IMR-90 (cell line): ENCODE measurements at regions of chr2 and their contacts with region 1.

Region 1: GRCh38 chr2:84881581-84882414 is 914 bp upstream of the TRABD2A start:
- DNase-seq: peak; percentile 85
- ATAC-seq: peak; percentile 70
- H3K4me3 ChIP-seq: peak overlapping the region; percentile 91
- H3K27ac ChIP-seq: peak overlapping the region; percentile 63
- H3K4me1 ChIP-seq: peaks cover 12% of the 10 kb centered on the region
- H3K27me3 ChIP-seq: no peaks in the 10 kb centered on the region
- CTCF ChIP-seq: peak; percentile 84
- POLR2A ChIP-seq: 0 out of 2 replicates have a peak, but pooled peaks have one; percentile 1
- RAD21 ChIP-seq: peak; percentile 85

Region 2: DNA sequence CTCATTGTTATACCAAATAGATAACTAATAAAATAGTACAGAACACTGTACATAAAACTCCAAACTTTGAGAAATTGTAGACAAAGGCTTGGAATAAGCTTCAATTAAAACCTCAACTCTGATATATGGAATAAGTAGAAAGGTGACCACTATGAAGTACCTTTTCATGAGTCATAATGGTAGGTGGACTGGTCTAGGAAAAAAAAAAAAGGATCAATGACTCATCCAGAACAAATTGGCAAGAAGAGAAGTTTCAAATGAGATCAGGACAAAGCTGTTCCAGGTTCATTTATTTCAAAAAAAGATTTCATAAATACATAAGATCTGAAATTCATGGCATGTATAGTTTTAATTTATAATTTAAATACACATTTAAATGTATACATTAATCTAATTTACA is 1192.4 kb before region 1 on chr2:
- CTCF ChIA-PET with region 1: no interaction called
- POLR2A ChIA-PET with region 1: no interaction called
- dilution Hi-C with region 1: no loop called
- in situ Hi-C with region 1: no loop called
- intact Hi-C with region 1: no loop called
- DNase-seq: no peak
- ATAC-seq: no peak
- H3K4me3 ChIP-seq: no peak overlapping the region
- H3K27ac ChIP-seq: no peak overlapping the region
- H3K4me1 ChIP-seq: no peaks in the 10 kb centered on the region
- H3K27me3 ChIP-seq: no peaks in the 10 kb centered on the region
- CTCF ChIP-seq: no peak
- POLR2A ChIP-seq: no peak
- RAD21 ChIP-seq: no peak

Region 3: GRCh38 chr2:84495539-84496146 is 386.2 kb before region 1 on chr2:
- CTCF ChIA-PET with region 1: interaction called, 8 read pairs
- POLR2A ChIA-PET with region 1: no interaction called
- dilution Hi-C with region 1: no loop called
- in situ Hi-C with region 1: loop called (anchors 5 kb)
- intact Hi-C with region 1: loop called (anchors 1 kb)
- DNase-seq: peak; percentile 78
- ATAC-seq: peak; percentile 82
- H3K4me3 ChIP-seq: no peak overlapping the region
- H3K27ac ChIP-seq: no peak overlapping the region
- H3K4me1 ChIP-seq: peaks cover 4% of the 10 kb centered on the region
- H3K27me3 ChIP-seq: no peaks in the 10 kb centered on the region
- CTCF ChIP-seq: peak; percentile 76
- POLR2A ChIP-seq: peak; percentile 33; the same call in 1 of the 2 replicates
- RAD21 ChIP-seq: peak; percentile 82

Region 4: DNA sequence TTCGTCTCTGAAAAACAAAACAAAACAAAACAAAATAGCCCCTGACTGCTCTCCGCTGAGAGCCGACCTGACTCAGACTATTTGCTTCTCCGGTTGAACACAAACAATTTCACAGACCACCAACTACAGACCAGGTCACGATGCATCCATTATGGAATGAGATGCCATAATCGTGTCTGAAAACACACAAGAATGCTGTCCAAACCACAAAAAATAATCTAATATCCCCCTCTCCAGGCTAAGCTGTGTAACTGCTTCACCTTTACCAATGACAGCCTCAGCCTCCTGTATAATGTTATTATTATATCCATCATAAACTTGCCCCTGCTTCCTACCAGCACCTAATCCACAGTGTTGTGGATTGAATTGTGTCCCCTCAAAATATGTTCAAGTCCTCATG is 250.8 kb before region 1 on chr2:
- CTCF ChIA-PET with region 1: no interaction called
- POLR2A ChIA-PET with region 1: no interaction called
- dilution Hi-C with region 1: no loop called
- in situ Hi-C with region 1: no loop called
- intact Hi-C with region 1: loop called (anchors 2 kb)
- DNase-seq: peak; percentile 53
- ATAC-seq: peak; percentile 97
- H3K4me3 ChIP-seq: no peak overlapping the region
- H3K27ac ChIP-seq: no peak overlapping the region
- H3K4me1 ChIP-seq: no peaks in the 10 kb centered on the region
- H3K27me3 ChIP-seq: peaks cover 7% of the 10 kb centered on the region
- CTCF ChIP-seq: peak; percentile 60
- POLR2A ChIP-seq: no peak
- RAD21 ChIP-seq: peak; percentile 74

Region 5: DNA sequence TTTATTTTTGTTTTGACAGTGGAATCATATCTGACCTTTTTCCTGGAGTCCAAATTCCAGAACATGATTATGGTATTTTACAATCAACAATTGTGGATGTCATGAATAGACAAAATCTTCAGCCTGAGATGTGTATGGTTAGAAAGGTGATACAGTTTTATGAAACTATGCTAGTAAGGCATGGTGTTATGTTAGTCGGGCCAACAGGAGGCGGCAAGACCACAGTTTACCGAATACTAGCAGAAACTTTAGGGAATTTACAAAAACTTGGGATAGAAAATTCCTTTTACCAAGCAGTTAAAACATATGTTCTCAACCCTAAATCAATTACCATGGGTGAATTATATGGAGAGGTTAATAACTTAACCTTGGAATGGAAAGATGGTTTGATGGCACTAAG is 228.5 kb before region 1 on chr2:
- CTCF ChIA-PET with region 1: no interaction called
- POLR2A ChIA-PET with region 1: no interaction called
- dilution Hi-C with region 1: no loop called
- in situ Hi-C with region 1: no loop called
- intact Hi-C with region 1: loop called (anchors 1 kb)
- DNase-seq: peak; percentile 7
- ATAC-seq: no peak
- H3K4me3 ChIP-seq: no peak overlapping the region
- H3K27ac ChIP-seq: no peak overlapping the region
- H3K4me1 ChIP-seq: no peaks in the 10 kb centered on the region
- H3K27me3 ChIP-seq: peaks cover 12% of the 10 kb centered on the region
- CTCF ChIP-seq: peak; percentile 40
- POLR2A ChIP-seq: no peak
- RAD21 ChIP-seq: peak; percentile 55

Region 6: DNA sequence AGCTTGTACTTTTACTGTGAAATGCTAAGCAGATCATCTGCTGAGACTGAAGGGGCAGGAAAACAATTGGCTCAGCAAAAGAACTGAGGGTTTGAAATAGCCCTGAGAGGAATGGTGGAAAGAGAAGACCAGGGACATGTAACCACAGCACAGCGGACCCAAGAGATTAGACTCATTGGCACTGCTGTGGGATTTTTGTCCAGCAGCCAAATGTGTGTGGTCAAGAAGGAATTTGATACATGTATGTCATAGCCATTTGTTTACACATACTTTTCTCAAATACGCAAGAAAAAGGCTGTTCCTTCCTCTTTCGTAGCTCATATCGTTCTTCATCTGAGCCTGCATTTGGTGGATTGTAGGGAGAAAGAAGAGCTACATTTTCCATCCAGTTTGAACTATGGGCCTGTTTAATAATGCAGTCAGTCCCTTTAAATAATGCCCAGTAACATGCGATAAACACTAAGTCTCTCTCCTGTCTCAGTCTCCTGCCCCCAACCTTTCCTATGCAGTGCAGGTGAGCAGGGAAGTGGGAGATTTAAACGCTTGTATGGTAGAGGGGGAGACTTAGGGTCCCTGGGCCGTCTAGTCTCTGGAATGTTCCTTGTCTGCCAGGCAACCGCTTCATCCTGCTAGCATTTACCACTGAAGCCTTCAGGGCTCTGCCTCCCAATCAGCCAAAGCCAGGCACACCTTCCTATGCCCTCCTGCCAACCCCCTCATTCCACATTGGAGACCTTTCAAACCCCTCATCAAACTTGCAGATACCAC is 74.6 kb before region 1 on chr2:
- CTCF ChIA-PET with region 1: no interaction called
- POLR2A ChIA-PET with region 1: no interaction called
- dilution Hi-C with region 1: no loop called
- in situ Hi-C with region 1: no loop called
- intact Hi-C with region 1: loop called (anchors 1 kb)
- DNase-seq: peak; percentile 100
- ATAC-seq: peak; percentile 87
- H3K4me3 ChIP-seq: no peak overlapping the region
- H3K27ac ChIP-seq: peak overlapping the region; percentile 97
- H3K4me1 ChIP-seq: peaks cover 11% of the 10 kb centered on the region
- H3K27me3 ChIP-seq: no peaks in the 10 kb centered on the region
- CTCF ChIP-seq: no peak
- POLR2A ChIP-seq: peak; percentile 76
- RAD21 ChIP-seq: no peak

Region 7: GRCh38 chr2:84905181-84906107 is 23.6 kb after region 1 on chr2 and contains the start of gene TMSB10:
- CTCF ChIA-PET with region 1: no interaction called
- POLR2A ChIA-PET with region 1: no interaction called
- dilution Hi-C with region 1: no loop called
- in situ Hi-C with region 1: no loop called
- intact Hi-C with region 1: loop called (anchors 1 kb)
- DNase-seq: peak; percentile 80
- ATAC-seq: peak; percentile 84
- H3K4me3 ChIP-seq: peak within 1 kb of the TSS; percentile 86
- H3K27ac ChIP-seq: peak within 1 kb of the TSS; percentile 93
- H3K4me1 ChIP-seq: peaks cover 2% of the 10 kb centered on the region; the same call in 1 of the 2 replicates
- H3K27me3 ChIP-seq: no peaks in the 10 kb centered on the region
- CTCF ChIP-seq: 0 out of 2 replicates have a peak, but pooled peaks have one; percentile 19
- POLR2A ChIP-seq: peak; percentile 99
- RAD21 ChIP-seq: no peak
- total RNA-seq, gene TMSB10: 842 and 3,620 TPM in 2 replicates

Region 8: GRCh38 chr2:84959045-84959493 is 77.3 kb after region 1 on chr2:
- CTCF ChIA-PET with region 1: no interaction called
- POLR2A ChIA-PET with region 1: no interaction called
- dilution Hi-C with region 1: no loop called
- in situ Hi-C with region 1: no loop called
- intact Hi-C with region 1: no loop called
- DNase-seq: peak; percentile 90
- ATAC-seq: peak; percentile 52
- H3K4me3 ChIP-seq: no peak overlapping the region
- H3K27ac ChIP-seq: peak overlapping the region; percentile 82
- H3K4me1 ChIP-seq: peaks cover 26% of the 10 kb centered on the region
- H3K27me3 ChIP-seq: no peaks in the 10 kb centered on the region
- CTCF ChIP-seq: no peak
- POLR2A ChIP-seq: no peak
- RAD21 ChIP-seq: no peak